ENCODE measurements at regions of chr2 and their contacts with region 1.

Region 1: DNA sequence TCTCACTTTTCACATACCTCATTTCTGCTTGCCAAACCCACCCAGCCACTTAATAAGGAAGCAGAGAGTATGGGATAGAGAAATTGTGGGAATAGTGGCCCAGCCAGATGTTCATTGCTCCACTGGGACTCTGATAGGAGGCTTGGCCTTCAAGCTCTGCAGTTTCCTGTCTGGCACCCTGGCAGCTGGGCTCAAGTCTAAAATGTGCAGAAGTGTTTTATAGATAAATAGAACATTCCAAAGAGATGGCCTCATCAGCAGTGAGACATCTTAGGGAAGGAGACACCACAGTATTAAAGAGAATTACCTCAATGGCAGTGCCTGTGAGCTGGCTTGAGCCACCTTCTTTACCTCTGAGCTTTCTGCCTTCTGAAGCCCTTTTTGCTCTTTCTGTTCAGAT is 24.7 kb downstream of the COPS7B start:
- DNase-seq: peak; percentile 72
- H3K4me3 ChIP-seq: no peak overlapping the region
- H3K27me3 ChIP-seq: no peaks in the 10 kb centered on the region
- CTCF ChIP-seq: no peak

Region 2: GRCh38 chr2:231795291-231796040 is 15.4 kb before region 1 on chr2:
- CTCF ChIA-PET with region 1: interaction called, 21 read pairs
- POLR2A ChIA-PET with region 1: no interaction called
- DNase-seq: no peak
- H3K4me3 ChIP-seq: no peak overlapping the region
- H3K27me3 ChIP-seq: no peaks in the 10 kb centered on the region
- CTCF ChIP-seq: peak; percentile 54

Region 3: DNA sequence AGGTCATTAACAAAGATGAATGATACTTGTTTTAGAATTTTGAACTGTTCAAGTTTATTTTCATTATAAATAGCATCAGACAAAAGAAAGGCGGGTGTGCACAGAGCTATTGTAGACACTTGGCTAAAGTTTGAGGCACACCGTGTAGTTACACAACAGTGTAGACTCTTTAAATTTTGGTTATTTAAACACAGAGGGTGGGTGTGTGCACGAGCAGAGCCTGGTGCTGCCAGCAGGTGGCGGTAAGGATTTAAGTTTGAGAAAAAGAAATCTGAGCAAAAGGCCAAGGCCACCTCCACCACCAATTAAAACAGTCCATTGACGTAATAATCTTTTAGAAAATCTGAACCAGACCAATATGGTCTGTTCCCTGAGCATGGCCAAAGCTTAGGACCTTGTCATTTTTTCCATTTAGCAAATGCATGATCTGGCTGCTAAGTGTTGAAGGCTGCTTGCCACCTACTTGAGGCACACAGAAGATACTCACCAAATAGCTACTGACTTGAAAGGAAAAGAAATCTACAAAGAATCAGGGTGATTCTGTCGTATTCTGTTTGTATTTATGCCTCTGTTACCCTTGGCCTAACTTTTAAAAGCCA is 10.3 kb before region 1 on chr2:
- CTCF ChIA-PET with region 1: interaction called, 21 read pairs
- POLR2A ChIA-PET with region 1: no interaction called
- DNase-seq: no peak
- H3K4me3 ChIP-seq: no peak overlapping the region
- H3K27me3 ChIP-seq: no peaks in the 10 kb centered on the region
- CTCF ChIP-seq: peak; percentile 79

Measured in BJ (cell line).